ENCODE measurements at regions of chr2 and their contacts with region 1.

Region 1: DNA sequence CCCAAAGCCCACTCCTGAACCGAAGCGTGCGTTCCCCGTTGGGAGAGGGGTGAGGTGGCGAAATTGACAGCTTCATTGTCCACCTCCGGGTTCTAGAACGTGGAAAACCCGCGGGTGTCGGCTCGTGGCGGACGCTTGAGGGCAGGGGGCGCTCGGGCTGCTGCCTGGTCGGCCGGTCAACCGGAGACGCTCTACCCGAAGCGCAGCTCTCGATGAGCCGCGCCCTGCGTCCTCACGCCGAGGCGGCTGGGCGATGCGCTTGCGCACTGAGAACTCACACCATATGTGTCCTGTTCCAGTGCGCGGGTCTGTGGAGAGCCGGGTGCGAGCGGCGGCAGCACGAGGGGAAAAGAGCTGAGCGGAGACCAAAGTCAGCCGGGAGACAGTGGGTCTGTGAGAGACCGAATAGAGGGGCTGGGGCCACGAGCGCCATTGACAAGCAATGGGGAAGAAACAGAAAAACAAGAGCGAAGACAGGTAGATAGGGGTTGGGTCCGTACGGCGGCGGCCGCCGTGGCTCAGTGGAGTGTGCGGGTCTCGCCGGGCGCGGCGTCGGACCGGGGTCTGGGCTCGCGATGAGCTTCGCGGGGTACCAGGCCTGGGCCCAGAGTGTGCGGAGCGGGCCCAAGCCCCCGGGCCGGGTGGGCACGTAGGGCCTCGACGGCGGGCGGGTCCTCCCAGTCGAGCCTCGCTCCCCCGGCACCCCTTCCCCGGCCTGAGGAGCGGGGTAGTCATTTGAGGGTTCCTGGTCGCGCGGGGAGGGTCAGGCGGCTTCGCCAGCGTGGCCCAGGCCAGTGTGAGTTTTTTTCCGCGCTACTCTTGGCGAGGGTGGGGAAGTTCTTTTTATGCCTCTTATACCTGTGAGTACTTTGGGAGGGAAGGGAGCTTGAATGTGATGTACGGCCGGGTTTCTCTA is at the start of gene EIF5B:
- DNase-seq: peak; percentile 97
- ATAC-seq: peak; percentile 86
- total RNA-seq, gene EIF5B: 24.3 to 33.0 TPM

Region 2: DNA sequence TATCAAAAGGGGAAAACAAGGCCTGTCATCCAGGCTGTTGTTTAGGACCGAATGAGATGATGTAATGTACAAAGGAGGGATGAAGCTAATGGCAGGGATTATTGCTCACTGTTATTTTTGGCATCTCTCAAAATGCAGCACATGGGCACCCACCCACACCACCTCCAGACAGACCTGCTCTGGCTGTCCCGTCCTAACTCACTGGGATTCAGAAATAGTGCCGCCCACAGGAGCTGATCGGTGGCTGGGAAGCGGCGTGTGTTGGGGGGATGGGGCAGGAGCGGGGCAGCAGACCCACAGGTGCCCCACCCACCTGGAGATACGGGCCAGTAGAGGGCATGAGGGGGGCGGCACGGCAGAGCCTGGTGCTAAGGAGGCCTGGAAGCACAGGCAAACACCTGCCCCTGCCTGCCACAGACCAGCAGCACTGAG is 453.6 kb before region 1 on chr2:
- intact Hi-C with region 1: no loop called
- DNase-seq: no peak
- ATAC-seq: no peak

Region 3: DNA sequence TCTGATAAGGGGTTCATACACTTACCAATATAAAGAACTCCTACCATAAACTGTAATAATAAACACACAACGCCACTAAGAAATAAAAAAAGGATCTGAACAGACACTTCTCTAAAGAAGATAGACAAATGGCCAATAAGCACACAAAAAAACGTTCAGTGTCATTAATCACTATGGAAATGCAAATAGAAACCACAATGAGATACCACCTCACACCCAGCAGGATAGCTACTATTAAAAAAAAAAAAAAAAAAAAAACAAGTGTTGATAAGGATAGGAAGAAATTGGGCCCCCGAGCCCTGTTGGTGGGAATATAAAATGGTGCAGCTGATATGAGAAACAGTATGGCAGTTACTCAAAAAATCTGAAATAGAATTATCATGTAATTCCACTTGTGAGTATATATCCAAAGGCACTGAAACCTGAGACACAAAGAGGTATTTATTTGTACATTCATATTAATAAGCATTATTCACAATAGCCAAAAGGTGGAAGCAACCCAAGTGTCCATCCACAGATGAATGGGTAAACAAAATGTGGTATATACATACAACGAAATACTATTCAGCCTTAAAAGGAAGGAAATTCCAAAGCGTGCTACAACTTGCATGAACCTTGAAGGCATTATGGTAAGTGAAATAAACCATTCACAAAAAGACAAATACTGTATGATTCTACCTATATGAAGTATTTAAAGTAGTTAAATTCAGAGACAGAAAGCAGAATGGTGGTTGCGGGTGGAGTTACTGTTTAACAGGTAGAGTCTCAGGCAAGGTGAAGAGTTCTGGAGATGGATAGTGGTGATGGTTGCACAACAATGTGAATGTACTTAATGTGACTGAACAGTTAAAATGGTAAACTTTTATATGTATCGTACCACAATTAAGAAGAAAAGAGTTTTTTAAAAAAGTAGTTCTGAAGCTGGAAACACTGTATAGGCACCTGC is 134.6 kb after region 1 on chr2:
- intact Hi-C with region 1: no loop called
- DNase-seq: no peak
- ATAC-seq: peak; percentile 16

Region 4: DNA sequence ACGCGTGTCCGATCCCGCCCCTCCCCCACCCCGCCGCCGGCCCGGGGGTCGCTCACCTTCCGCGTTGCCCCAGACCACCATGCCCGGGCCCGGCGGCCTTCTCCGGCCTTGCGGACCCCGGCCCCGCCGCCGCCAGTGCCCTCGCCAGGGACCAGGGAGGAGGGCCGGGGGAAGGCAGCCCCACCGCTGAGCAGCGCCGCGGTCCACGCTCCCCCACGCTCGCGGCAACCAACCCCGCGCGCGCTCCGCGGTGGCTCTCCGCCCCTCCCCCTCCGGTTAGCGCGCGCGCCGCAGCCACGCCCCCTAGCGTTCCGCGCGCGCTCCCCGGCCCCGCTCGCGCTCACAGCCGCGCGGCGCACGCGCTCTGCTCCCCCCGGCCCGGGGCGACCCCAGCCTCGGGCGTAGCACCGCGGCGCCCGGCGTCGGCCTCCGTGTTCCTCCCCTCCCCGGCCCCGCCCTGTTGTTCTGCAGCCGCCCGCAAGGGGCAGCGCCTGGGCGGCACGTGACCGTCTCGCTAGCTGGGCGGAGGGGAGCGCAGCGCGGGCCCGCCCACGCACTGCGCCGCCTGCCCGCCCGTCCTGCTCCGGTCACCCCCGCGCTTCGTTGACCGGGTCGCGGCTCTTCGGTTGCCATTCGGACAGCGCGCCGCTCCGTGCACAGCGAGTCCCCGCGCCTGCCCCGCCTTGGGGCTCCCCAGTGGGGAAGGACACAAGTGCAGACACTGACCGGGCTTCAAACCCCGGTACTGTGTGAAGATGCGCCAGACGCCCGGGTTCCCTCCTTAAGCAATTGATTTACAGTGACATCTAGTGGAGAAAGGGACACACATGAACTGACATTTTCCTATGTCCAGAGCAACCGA is 152.6 kb after region 1 on chr2 and contains the start of gene REV1:
- intact Hi-C with region 1: loop called in 1 of 2 experiments (anchors 5 kb)
- DNase-seq: peak; percentile 91 to 92
- ATAC-seq: peak; percentile 85
- total RNA-seq, gene REV1: 40.8 to 44.0 TPM

Measured in left colon (tissue), 2 donors.